ENCODE measurements at regions of chr6 and their contacts with region 1.

Region 1: DNA sequence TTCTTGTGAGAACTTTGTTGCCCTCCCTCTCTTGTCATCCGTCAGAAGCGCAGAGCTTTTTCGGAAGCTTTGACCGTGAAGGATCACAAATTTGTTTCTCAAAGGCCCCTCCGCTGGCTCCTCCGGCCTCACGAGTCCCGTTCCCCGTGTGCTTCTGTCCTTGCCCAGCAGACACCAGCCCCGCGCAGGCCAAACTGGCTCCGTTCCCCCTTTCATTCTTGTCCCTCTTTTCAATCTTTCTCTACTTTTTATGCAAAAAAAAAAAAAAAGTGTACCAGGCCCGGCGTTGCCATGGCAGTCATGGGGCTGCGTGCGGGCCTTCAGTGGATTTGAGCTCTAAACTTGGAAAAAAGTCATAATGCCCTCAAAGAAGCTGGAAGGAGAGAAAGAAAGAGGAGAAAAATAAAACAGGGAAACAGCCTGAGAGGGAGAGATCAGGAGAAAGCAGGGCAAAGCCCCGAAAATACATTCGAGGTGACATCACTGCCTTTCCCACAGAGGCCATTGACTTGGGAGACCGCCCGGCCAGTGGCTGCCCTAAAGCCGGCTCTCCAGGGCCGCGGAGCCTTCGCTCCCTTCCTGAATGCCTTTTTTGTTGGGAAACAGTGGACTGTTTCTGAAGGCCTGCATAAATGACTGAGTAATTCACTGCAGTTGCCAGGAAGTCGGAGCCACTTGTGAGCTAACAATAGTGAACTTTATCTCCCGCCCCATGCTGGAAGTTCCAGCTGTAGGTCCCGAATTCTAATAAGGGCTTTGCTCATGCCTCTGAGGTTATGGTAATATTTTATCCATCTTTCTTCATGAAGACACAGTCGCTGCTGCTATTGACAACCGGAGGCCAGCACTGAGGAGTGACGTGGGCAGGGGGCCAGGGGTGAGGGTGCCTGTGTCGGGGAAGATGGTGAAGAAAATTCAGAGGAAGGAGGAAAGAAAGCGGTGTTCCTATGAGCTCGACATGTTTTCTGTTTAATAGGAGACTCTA is 670.9 kb downstream of the QKI start:
- DNase-seq: peak; percentile 53 to 91
- H3K4me3 ChIP-seq: peak overlapping the region in 1 of 2 donors; percentile 62
- H3K27ac ChIP-seq: peak overlapping the region; percentile 93 to 96
- H3K4me1 ChIP-seq: peaks cover 0 to 12% of the 10 kb centered on the region in 2 donors
- H3K27me3 ChIP-seq: no peaks in the 10 kb centered on the region
- CTCF ChIP-seq: no peak

Region 2: GRCh38 chr6:163338671-163339405 is 746.5 kb before region 1 on chr6:
- intact Hi-C with region 1: loop called (anchors 10 kb)
- DNase-seq: no peak
- H3K4me3 ChIP-seq: no peak overlapping the region
- H3K27ac ChIP-seq: peak overlapping the region; percentile 1 to 30
- H3K4me1 ChIP-seq: peaks cover 3 to 13% of the 10 kb centered on the region in 2 donors
- H3K27me3 ChIP-seq: no peaks in the 10 kb centered on the region
- CTCF ChIP-seq: no peak

Region 3: GRCh38 chr6:163926642-163927041 is 158.7 kb before region 1 on chr6:
- intact Hi-C with region 1: no loop called
- DNase-seq: no peak
- H3K4me3 ChIP-seq: no peak overlapping the region
- H3K27ac ChIP-seq: no peak overlapping the region
- H3K4me1 ChIP-seq: no peaks in the 10 kb centered on the region
- H3K27me3 ChIP-seq: no peaks in the 10 kb centered on the region
- CTCF ChIP-seq: no peak